Activated CD4-positive, alpha-beta memory T cell treated with anti-CD3 and anti-CD28 coated beads, Interleukin-2, amount 10 ng/mL, durations not matched to agents 7 days and 5 days (primary cell): ENCODE measurements at regions of chr1 and their contacts with region 1.

Region 1: GRCh38 chr1:246002725-246003441 is 504.2 kb downstream of the SMYD3 start:
- DNase-seq: peak; percentile 83
- H3K4me3 Mint-ChIP-seq: no peak overlapping the region
- H3K27ac Mint-ChIP-seq: no peak overlapping the region
- H3K4me1 Mint-ChIP-seq: no peaks in the 10 kb centered on the region
- H3K27me3 Mint-ChIP-seq: no peaks in the 10 kb centered on the region

Region 2: GRCh38 chr1:245153081-245153551 is 849.8 kb before region 1 on chr1:
- CTCF ChIA-PET with region 1: interaction called, 16 read pairs
- POLR2A ChIA-PET with region 1: interaction called, 3 read pairs
- DNase-seq: peak; percentile 64
- H3K4me3 Mint-ChIP-seq: peak overlapping the region; percentile 61
- H3K27ac Mint-ChIP-seq: no peak overlapping the region
- H3K4me1 Mint-ChIP-seq: peaks cover 26% of the 10 kb centered on the region
- H3K27me3 Mint-ChIP-seq: peaks cover 65% of the 10 kb centered on the region

Region 3: DNA sequence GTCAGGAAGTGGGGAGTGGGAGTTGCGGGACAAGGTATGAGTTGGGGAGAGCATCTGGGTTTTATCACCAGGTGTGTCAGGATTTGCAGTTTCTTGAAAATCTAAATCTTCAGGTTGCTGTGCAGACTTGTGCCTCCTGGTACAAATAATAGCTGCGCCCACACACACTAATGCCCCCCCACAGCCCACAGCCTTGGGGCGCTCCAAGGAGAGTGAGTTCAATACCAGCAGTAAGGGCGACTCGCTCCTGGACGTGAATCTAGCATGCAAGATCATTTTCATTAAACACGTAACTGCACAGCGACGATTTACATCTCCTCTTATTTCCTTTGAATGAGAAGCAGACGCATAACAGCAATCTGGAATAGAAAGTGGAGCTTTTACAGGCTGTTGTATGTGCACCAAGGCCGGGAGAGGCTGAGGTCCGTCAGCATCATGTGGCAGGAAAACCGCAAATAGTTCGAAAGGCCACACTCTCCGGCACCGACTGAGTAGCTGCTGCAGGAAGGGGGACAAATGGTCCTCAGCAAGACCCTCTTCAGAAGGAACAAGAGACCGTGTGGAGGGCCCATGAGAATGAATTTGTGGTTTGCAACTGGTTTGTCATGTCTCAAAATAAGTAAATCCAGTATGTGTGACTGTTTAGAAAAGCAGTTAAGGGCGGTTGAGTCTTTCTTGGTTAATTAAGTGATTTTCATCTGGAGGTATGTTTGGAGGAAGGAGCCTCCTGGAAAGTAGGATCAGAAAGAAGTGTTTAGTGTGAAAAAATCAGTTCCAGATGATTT is 64.7 kb after region 1 on chr1:
- CTCF ChIA-PET with region 1: no interaction called
- POLR2A ChIA-PET with region 1: no interaction called
- DNase-seq: no peak
- H3K4me3 Mint-ChIP-seq: no peak overlapping the region
- H3K27ac Mint-ChIP-seq: no peak overlapping the region
- H3K4me1 Mint-ChIP-seq: peaks cover 8% of the 10 kb centered on the region
- H3K27me3 Mint-ChIP-seq: no peaks in the 10 kb centered on the region